Ascending aorta (tissue), 2 donors: ENCODE measurements at regions of chr14 and their contacts with region 1.

Region 1: DNA sequence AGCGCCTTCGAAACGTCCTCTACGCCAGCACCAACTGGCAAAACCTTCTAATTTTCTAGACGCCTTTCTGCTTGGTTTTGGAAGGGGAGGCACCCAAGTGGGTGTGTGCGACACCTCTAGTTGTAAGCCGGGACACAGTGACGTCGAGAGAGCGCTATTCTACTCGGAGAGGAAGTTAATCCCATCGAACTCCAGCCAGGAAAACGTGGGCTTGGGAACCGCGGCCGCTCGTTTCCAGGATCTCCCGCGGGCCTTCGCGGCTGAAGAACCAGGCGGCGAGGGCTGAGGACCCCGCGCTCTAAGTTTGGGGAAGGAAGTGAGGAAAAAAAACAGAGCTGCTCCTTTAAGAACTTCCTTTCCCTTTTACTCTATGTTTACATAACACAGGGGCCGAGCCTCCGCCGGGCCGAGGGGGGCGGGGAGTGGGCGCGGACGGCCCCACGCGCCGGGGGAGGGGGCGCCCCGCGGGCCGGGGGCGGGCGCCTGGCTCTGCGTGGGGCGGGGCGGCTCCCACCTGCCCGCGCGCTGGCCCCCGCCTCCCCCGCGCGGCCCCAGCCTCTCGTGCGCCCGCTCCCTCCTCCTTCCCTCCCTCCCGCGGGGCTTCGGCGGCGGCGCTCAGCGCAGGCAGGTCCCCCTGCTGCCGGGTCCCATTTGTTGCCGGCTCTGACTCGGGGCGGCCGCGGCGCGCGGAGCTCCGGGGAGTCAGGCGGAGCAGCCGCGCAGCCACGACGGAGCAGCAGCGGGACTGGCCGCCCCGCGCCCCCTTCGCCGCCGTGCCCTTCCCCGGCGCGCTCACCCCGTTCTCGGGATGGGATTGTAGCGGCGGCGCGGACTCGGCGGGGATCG is at the start of gene PELI2:
- DNase-seq: peak in 1 of 2 donors; percentile 85
- H3K4me3 ChIP-seq: peak within 1 kb of the TSS; percentile 100
- H3K27ac ChIP-seq: peak within 1 kb of the TSS; percentile 90 to 99
- H3K4me1 ChIP-seq: peaks cover 0 to 18% of the 10 kb centered on the region in 2 donors
- H3K27me3 ChIP-seq: no peaks in the 10 kb centered on the region
- CTCF ChIP-seq: peak in 1 of 3 experiments; percentile 52
- total RNA-seq, gene PELI2: 17.1 TPM

Region 2: GRCh38 chr14:55579724-55580469 is 538.1 kb before region 1 on chr14 and contains the start of gene KTN1:
- intact Hi-C with region 1: loop called (anchors 5 kb)
- DNase-seq: peak; percentile 24 to 86
- H3K4me3 ChIP-seq: peak within 1 kb of the TSS; percentile 87 to 89
- H3K27ac ChIP-seq: peak within 1 kb of the TSS; percentile 97
- H3K4me1 ChIP-seq: peaks cover 3 to 22% of the 10 kb centered on the region in 2 donors
- H3K27me3 ChIP-seq: no peaks in the 10 kb centered on the region
- CTCF ChIP-seq: no peak
- total RNA-seq, gene KTN1: 36.3 TPM

Region 3: DNA sequence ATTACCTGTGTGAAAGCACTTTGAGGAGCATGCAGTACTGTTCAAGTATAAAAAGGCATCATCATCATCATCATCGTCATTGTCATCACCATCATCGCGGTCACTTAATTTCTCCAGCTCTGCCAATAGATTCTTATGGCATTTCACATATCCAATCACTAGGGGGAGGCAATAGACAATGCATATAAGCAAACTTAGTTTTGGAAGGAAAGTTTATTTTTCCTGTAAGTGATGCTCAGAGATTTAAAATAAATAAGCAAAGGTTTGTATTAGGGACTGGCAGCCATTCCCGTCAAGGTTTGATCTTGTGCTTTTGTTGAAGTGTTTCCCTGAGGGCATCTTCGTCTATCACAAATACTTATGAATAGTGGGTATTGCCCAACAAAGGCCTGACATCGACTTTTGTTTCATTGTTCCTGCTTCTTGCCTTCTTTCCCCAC is 410.6 kb before region 1 on chr14:
- intact Hi-C with region 1: loop called (anchors 10 kb)
- DNase-seq: no peak
- H3K4me3 ChIP-seq: no peak overlapping the region
- H3K27ac ChIP-seq: no peak overlapping the region
- H3K4me1 ChIP-seq: no peaks in the 10 kb centered on the region
- H3K27me3 ChIP-seq: no peaks in the 10 kb centered on the region
- CTCF ChIP-seq: peak; percentile 59 to 67 (median 64)

Region 4: GRCh38 chr14:56271970-56272369 is 154.0 kb after region 1 on chr14:
- intact Hi-C with region 1: loop called (anchors 5 kb)
- DNase-seq: no peak
- H3K4me3 ChIP-seq: no peak overlapping the region
- H3K27ac ChIP-seq: peak overlapping the region; percentile 68 to 69
- H3K4me1 ChIP-seq: peaks cover 9 to 22% of the 10 kb centered on the region in 2 donors
- H3K27me3 ChIP-seq: no peaks in the 10 kb centered on the region
- CTCF ChIP-seq: no peak

Region 5: DNA sequence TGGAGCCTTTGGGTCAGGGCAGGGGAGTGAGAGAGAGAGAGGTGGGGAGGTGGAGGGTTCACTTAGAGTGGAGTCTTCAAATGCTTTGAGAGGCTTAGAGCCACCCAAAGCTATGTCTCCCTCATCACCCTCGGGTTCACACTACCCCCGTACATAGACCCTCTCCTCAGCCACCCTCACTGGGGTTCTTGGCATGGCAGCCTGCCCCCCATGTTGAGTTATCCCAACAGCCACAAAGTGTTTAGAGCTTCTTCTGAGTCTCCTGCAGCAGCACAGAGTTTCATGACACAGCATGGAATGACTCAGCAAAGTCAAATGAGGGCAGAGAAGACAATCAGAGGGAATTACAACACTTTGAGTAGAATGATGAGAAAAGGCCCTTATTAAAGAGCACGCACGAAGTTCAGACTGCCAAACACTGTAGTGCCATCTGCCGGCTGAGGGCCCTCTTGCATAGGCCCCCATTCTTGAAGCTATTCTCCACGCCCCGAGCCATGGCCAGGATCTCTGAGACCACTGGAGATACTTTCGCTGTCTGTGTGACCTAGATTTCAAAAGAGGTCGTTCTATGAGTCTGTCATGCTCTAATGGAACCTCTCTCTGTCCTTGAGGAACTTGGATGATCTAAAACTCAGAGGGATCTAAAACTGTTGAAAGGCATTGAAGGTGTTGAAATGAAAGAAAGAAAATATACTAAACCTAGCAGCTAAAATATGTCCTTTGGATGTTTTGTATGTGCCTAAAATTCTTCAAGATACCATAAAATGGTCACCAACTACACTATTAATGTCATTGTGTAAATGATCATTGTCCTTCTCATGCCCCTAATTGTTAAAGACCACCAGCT is 222.1 kb after region 1 on chr14:
- intact Hi-C with region 1: loop called (anchors 2 kb)
- DNase-seq: peak; percentile 19 to 87
- H3K4me3 ChIP-seq: no peak overlapping the region
- H3K27ac ChIP-seq: peak overlapping the region; percentile 42 to 51
- H3K4me1 ChIP-seq: peaks cover 2 to 31% of the 10 kb centered on the region in 2 donors
- H3K27me3 ChIP-seq: no peaks in the 10 kb centered on the region
- CTCF ChIP-seq: peak; percentile 60 to 79 (median 70)

Region 6: DNA sequence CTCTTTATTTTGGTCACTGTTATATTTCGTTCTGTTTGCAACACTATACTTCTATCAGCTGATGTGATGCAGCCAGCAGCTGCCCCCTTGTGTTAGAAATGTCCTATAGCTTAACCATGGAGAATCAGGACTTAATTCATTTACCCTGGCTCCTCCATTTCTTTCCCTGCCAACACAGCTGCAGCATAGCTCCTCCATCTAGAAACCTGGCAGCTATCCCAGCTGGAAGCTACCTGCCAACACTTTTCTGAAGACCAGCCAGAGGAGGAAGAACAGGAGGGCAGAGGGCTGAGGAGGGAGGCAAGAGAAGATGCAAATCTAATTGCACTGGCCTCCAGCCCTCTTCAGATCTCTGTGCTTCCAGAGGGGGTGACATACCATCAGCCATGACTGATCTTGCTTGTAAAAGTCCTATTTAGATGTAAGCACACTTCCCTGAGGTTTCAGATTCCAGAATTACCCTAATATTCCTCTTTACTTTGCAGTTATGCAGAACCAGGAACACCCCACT is 304.8 kb after region 1 on chr14:
- intact Hi-C with region 1: loop called (anchors 5 kb)
- DNase-seq: peak in 1 of 2 donors; percentile 77
- H3K4me3 ChIP-seq: no peak overlapping the region
- H3K27ac ChIP-seq: no peak overlapping the region
- H3K4me1 ChIP-seq: peaks cover 0 to 4% of the 10 kb centered on the region in 2 donors
- H3K27me3 ChIP-seq: no peaks in the 10 kb centered on the region
- CTCF ChIP-seq: peak; percentile 44 to 70 (median 69)